Activated T-helper 1 cell treated with anti-CD3 and anti-CD28 coated beads, Interleukin-12 subunit alpha, Interleukin-12 subunit beta, Interleukin-2, Interleukin-4 antibody, amounts not matched to agents 30 ng/mL and 10 ng/mL and 1 ng/mL, durations not matched to agents 14 hours and 24 hours and 36 hours (primary cell): ENCODE measurements at regions of chr3 and their contacts with region 1.

Region 1: GRCh38 chr3:106333911-106334618 is 465.3 kb upstream of the CBLB start:
- DNase-seq: peak; percentile 31
- H3K4me3 Mint-ChIP-seq: peak overlapping the region; percentile 63
- H3K27ac Mint-ChIP-seq: peak overlapping the region; percentile 92
- H3K4me1 Mint-ChIP-seq: peaks cover 89% of the 10 kb centered on the region
- H3K27me3 Mint-ChIP-seq: no peaks in the 10 kb centered on the region

Region 2: DNA sequence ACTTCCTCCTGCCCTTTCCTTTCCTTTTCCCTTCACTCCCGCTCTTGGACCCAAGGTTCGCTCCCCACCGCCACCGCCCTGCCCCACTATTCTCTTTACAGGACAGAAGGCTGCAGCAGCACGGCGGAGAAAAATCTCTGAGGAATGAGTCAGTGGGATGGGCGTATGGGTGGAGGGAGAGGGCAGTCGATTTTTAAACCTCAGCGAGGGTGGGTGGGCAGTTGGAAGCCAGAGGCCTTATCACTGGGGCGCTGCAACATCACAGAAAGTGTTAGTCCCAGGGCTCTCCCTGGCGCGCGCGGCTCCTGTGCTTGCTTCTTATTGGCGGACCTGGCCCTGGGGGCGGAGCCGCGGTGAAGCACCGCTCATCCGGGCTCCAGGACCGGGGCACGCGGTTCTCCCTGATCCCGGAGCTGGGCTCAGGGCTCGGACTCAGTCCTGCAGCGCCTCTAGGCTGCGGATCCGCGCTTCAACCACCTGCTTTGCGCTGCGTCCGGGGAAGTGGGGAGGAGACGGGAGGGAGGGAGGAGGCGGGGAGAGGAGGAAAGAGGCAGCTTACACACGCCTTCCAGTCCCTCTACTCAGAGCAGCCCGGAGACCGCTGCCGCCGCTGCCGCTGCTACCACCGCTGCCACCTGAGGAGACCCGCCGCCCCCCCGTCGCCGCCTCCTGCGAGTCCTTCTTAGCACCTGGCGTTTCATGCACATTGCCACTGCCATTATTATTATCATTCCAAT is 967.6 kb before region 1 on chr3 and contains the start of gene ALCAM:
- intact Hi-C with region 1: loop called (anchors 1 kb)
- DNase-seq: peak; percentile 80
- H3K4me3 Mint-ChIP-seq: peak within 1 kb of the TSS; percentile 90
- H3K27ac Mint-ChIP-seq: peak within 1 kb of the TSS; percentile 98
- H3K4me1 Mint-ChIP-seq: peaks cover 43% of the 10 kb centered on the region
- H3K27me3 Mint-ChIP-seq: peaks cover 22% of the 10 kb centered on the region
- total RNA-seq, gene ALCAM: 24.9 and 25.2 TPM in 2 replicates

Region 3: DNA sequence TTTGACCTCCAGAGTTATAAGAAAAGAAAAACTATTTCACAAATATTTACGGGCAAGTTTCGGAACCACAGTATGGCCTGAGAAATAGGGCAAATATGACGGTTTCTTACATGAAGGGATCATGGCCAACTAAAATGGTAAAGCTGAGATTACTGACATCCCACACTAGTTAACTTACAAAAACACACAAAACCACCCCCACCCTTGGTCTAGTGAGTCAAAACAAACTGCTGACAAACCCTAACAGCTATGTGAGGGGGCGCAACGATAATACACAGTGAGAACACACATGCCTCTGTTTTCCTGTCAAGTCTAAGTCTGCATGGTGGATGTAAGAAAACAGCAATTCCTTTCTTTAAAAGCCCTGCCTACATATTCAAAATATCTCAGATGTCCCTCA is 497.5 kb before region 1 on chr3:
- intact Hi-C with region 1: loop called (anchors 2 kb)
- DNase-seq: peak; percentile 27
- H3K4me3 Mint-ChIP-seq: peak overlapping the region; percentile 71
- H3K27ac Mint-ChIP-seq: peak overlapping the region; percentile 93
- H3K4me1 Mint-ChIP-seq: peaks cover 85% of the 10 kb centered on the region
- H3K27me3 Mint-ChIP-seq: no peaks in the 10 kb centered on the region

Region 4: GRCh38 chr3:106068795-106069194 is 265.3 kb before region 1 on chr3:
- intact Hi-C with region 1: loop called (anchors 2 kb)
- DNase-seq: peak; percentile 3
- H3K4me3 Mint-ChIP-seq: no peak overlapping the region
- H3K27ac Mint-ChIP-seq: peak overlapping the region; percentile 87
- H3K4me1 Mint-ChIP-seq: peaks cover 15% of the 10 kb centered on the region
- H3K27me3 Mint-ChIP-seq: no peaks in the 10 kb centered on the region

Region 5: GRCh38 chr3:106206146-106206545 is 127.9 kb before region 1 on chr3:
- intact Hi-C with region 1: loop called (anchors 2 kb)
- DNase-seq: no peak
- H3K4me3 Mint-ChIP-seq: peak overlapping the region; percentile 54
- H3K27ac Mint-ChIP-seq: peak overlapping the region; percentile 92
- H3K4me1 Mint-ChIP-seq: peaks cover 58% of the 10 kb centered on the region
- H3K27me3 Mint-ChIP-seq: no peaks in the 10 kb centered on the region

Region 6: DNA sequence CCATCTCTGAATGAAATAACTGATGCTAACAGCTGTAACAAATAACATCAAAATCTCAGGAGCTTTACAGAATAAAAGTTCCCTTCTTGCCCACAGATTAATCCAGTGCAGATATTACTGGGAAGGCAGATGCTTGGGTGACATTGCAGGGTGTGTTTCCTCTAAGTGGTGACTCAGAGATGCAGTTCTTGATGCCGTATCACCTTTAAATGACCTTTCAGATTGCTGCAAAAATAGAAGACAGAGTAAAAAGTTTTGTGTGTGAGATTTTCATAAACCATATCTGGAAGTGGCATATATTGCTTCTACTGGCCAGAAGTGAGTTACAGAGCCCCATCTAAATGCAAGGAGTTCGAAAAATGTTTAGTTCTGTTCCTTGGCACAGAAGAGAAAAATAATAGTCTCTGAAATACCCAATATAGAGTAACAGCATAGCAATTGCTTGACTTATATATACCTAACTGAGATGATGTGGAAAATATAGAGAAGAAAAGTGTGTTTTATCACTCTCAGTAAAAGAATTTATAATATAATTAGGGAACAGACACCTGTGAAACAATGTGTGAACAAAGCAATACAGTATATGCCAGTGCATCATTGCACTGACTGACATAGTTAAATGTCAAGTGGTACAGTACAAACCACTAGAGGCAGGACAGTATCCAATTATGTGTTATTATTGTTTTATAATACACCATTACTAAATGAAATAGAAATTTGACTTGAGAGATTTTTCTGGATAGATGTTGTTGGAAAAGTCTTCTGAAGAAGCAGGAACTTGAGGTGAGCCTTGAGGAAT is 34.6 kb before region 1 on chr3:
- intact Hi-C with region 1: loop called (anchors 1 kb)
- DNase-seq: no peak
- H3K4me3 Mint-ChIP-seq: peak overlapping the region; percentile 23
- H3K27ac Mint-ChIP-seq: peak overlapping the region; percentile 63
- H3K4me1 Mint-ChIP-seq: peaks cover 70% of the 10 kb centered on the region
- H3K27me3 Mint-ChIP-seq: no peaks in the 10 kb centered on the region

Region 7: GRCh38 chr3:106367496-106367895 is 33.4 kb after region 1 on chr3:
- intact Hi-C with region 1: no loop called
- DNase-seq: no peak
- H3K4me3 Mint-ChIP-seq: no peak overlapping the region
- H3K27ac Mint-ChIP-seq: no peak overlapping the region
- H3K4me1 Mint-ChIP-seq: peaks cover 9% of the 10 kb centered on the region
- H3K27me3 Mint-ChIP-seq: no peaks in the 10 kb centered on the region

Region 8: DNA sequence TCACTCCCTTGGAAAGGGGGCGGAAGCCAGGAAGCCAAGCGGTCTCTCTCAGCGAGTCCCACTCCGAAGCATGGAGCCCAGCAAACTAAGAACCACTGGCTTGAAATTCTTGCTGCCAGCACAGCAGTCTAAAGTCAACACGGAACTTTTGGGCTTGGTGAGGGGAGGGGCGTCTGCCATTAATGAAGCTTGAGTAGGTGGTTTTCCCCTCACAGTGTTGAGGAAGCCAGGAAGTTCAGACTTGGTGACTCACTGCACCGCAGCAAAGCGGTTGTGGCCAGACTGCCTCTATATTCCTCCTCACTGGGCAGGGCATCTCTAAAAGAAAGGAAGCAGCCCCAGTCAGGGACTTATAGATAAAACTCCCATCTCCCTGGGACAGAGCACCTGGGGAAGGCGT is 200.1 kb after region 1 on chr3:
- intact Hi-C with region 1: loop called (anchors 2 kb)
- DNase-seq: peak; percentile 40
- H3K4me3 Mint-ChIP-seq: no peak overlapping the region
- H3K27ac Mint-ChIP-seq: peak overlapping the region; percentile 72
- H3K4me1 Mint-ChIP-seq: peaks cover 28% of the 10 kb centered on the region
- H3K27me3 Mint-ChIP-seq: no peaks in the 10 kb centered on the region

Region 9: GRCh38 chr3:106814231-106814630 is 480.2 kb after region 1 on chr3:
- intact Hi-C with region 1: no loop called
- DNase-seq: no peak
- H3K4me3 Mint-ChIP-seq: no peak overlapping the region
- H3K27ac Mint-ChIP-seq: no peak overlapping the region
- H3K4me1 Mint-ChIP-seq: no peaks in the 10 kb centered on the region
- H3K27me3 Mint-ChIP-seq: peaks cover 2% of the 10 kb centered on the region